HepG2 (cell line): ENCODE measurements at regions of chr10 and their contacts with region 1.

Region 1: DNA sequence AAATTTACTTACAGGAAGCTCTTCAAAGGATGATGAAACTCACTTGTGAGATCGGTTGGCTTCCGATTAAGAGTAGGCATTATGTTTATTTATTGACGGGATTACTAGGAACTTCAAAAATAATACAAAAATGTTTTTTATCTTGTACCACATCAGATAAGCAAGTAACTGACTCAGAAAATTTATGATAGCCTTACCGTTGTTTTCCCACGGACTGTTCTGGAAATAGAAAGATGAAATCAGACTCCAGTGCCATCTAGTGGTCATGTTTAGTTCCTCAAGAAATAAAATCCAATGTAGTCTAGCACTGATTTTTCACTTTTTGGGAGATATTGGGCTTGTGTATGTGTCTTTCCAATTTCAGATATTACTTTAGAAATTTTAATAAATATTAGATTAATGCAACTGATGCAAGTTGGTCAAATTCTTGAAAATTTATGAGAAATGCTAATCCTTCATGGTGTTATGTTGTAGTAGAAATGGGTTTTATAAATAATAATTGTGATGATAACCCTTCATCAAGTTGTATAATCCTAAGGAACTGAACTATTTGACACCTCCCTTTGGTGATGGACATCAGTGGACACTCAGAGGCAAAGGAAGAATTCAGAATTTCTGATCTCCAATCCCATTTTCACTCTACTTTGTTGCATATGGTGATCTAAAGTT is 168.8 kb downstream of the TMEM26 start:
- DNase-seq: peak; percentile 53
- ATAC-seq: 0 out of 3 replicates have a peak, but pooled peaks have one; percentile 23
- H3K4me3 ChIP-seq: no peak overlapping the region
- H3K27ac ChIP-seq: no peak overlapping the region
- H3K4me1 ChIP-seq: no peaks in the 10 kb centered on the region
- H3K27me3 ChIP-seq: 0 out of 5 replicates have a peak, but pooled peaks cover 0 to 2% of the 10 kb centered on the region in 2 experiments
- CTCF ChIP-seq: peak; percentile 72
- EP300 ChIP-seq: no peak
- POLR2A ChIP-seq: no peak
- RAD21 ChIP-seq: 0 out of 2 replicates have a peak, but pooled peaks have one; percentile 18

Region 2: DNA sequence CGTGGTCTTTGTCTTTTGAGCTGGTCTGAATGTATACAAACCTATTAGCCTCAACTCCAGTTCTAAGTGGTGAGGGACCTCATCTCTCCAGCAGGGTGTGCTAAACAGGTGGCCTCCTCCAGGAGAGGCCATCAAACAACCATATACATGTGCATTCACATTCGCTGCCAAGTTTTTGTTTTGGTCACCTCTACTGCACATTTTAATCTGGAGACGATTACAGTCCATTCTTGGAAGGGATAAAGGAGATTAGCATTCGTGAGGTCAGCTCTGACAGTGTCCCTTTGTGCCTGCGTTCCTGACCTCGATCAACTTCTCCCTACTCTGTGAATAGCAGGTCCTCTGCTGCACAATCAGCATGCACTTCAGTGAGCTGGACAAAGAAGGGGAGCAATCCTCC is 401.2 kb before region 1 on chr10:
- CTCF ChIA-PET with region 1: no interaction called
- POLR2A ChIA-PET with region 1: no interaction called
- in situ Hi-C with region 1: no loop called
- intact Hi-C with region 1: loop called (anchors 1 kb)
- DNase-seq: peak; percentile 43
- ATAC-seq: peak; percentile 98
- H3K4me3 ChIP-seq: no peak overlapping the region
- H3K27ac ChIP-seq: no peak overlapping the region
- H3K4me1 ChIP-seq: no peaks in the 10 kb centered on the region
- H3K27me3 ChIP-seq: no peaks in the 10 kb centered on the region
- CTCF ChIP-seq: peak; percentile 62
- EP300 ChIP-seq: no peak
- POLR2A ChIP-seq: no peak
- RAD21 ChIP-seq: no peak

Region 3: DNA sequence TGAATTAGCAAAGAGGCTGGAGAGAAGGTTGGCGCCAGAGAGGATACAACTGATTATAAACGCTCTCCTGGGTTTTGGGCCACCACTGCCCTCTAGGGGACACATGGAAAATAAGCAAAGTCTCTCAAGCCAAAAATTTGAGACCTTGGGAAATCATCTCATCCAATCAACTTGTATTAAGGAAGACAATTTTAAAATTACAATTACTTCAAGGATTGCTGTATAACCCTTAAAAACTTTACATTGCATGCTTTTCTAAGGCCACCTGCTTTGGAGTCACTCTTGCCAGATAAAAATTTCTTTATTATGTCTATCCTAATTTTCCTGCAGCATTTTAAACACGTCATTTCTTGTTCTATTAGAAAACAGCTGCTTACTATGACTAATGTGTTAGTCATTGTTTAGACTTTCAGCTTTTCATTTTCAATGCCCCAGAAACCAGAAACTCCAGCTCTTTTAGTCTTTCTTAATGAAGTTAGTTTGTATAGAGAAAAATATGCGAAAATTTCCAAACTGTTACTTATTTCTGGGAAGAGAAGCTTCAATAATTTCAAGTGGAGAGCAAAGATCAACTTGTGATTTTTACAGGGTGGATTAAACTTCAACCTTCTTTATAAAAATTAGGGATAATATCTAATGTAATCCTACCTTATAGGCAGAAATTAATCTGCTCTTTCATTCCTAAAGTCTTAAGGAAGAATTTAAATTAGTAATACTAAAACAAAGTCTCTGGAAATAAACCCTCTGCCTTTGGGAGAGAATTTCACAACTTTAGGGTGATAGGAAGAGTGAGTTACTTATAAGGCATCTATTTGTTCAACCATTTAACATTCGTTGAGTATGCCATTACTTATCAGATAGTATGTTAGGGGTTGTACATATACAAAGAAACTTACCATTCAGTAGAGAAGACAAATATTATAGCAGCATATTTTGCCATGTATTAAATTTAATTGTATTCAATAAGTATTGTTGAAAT is 319.8 kb before region 1 on chr10:
- CTCF ChIA-PET with region 1: no interaction called
- POLR2A ChIA-PET with region 1: no interaction called
- in situ Hi-C with region 1: no loop called
- intact Hi-C with region 1: loop called (anchors 2 kb)
- DNase-seq: peak; percentile 63
- ATAC-seq: peak; percentile 56; the same call in 2 of the 3 replicates
- H3K4me3 ChIP-seq: no peak overlapping the region
- H3K27ac ChIP-seq: no peak overlapping the region
- H3K4me1 ChIP-seq: peaks cover 44% of the 10 kb centered on the region
- H3K27me3 ChIP-seq: no peaks in the 10 kb centered on the region
- CTCF ChIP-seq: peak; percentile 74
- EP300 ChIP-seq: no peak
- POLR2A ChIP-seq: no peak
- RAD21 ChIP-seq: peak; percentile 59

Region 4: GRCh38 chr10:61140765-61141392 is 143.5 kb before region 1 on chr10:
- CTCF ChIA-PET with region 1: interaction called, 7 read pairs
- POLR2A ChIA-PET with region 1: no interaction called
- in situ Hi-C with region 1: no loop called
- intact Hi-C with region 1: loop called (anchors 1 kb)
- DNase-seq: peak; percentile 68
- ATAC-seq: peak; percentile 84
- H3K4me3 ChIP-seq: no peak overlapping the region; a peak in 1 of 6 replicates
- H3K27ac ChIP-seq: no peak overlapping the region
- H3K4me1 ChIP-seq: peaks cover 20% of the 10 kb centered on the region
- H3K27me3 ChIP-seq: no peaks in the 10 kb centered on the region
- CTCF ChIP-seq: peak; percentile 74
- EP300 ChIP-seq: no peak
- POLR2A ChIP-seq: no peak
- RAD21 ChIP-seq: 0 out of 2 replicates have a peak, but pooled peaks have one; percentile 31

Region 5: DNA sequence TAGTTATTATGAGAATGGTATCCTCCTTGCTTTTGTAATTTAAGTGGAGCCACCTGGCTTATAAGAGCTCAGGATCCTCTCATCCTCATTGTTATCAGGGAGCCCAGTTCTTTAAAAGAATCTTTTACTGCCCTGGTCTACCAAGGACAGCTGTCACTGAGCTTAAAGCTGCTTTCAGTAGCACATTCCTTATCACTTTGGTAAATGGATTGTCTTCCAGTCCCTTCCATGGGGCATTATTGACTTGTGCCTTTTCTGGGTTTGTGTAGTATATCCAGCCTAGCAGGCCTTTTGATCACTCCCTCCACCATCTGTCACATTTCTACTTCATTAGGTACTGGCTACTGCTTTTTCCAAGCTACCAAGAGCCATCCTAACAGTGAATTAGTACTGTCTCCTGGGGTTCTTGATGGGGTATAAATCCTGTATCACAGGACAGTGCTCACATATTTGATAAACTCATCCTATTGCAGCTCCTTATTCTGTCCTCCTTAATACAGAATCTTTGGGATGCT is 40.0 kb before region 1 on chr10:
- CTCF ChIA-PET with region 1: no interaction called
- POLR2A ChIA-PET with region 1: no interaction called
- in situ Hi-C with region 1: no loop called
- intact Hi-C with region 1: no loop called
- DNase-seq: no peak
- ATAC-seq: no peak
- H3K4me3 ChIP-seq: no peak overlapping the region
- H3K27ac ChIP-seq: no peak overlapping the region
- H3K4me1 ChIP-seq: no peaks in the 10 kb centered on the region
- H3K27me3 ChIP-seq: no peaks in the 10 kb centered on the region
- CTCF ChIP-seq: no peak
- EP300 ChIP-seq: no peak
- POLR2A ChIP-seq: no peak
- RAD21 ChIP-seq: no peak